Ovary (tissue), 10 donors: ENCODE measurements at regions of chr5 and their contacts with region 1.

Region 1: DNA sequence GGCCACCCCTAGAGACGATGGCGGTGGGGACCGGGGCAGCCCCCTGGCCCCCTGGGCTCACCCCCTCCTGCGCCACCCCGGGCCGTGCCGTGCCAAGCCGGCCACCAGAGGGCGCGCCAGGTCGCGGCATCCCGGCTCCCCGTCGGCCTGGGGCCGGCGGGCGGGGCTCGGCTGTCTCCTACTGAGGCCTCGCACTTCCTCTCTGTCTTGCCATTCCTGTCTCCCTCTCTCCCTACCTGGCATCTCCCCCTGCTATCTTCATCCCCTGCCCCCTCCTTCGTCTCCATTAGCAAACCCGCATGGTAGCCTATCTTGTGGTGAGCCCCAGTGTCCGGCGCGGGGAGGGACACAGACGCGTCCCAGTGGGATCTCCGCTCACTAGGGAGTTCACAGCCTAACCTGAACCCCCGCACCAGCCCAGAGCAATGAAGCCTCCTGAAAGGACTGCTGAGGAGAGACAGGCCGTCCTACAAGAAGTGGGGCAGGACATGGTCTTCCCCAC is 29.8 kb upstream of the FABP6 start:
- DNase-seq: peak; percentile 68 to 87 (median 80)
- H3K4me3 ChIP-seq: peak overlapping the region; percentile 28
- H3K27ac ChIP-seq: no peak overlapping the region
- H3K4me1 ChIP-seq: peaks cover 1% of the 10 kb centered on the region
- H3K27me3 ChIP-seq: no peaks in the 10 kb centered on the region
- CTCF ChIP-seq: peak; percentile 83 to 95 (median 93)
- EP300 ChIP-seq: no peak
- POLR2A ChIP-seq: no peak

Region 2: DNA sequence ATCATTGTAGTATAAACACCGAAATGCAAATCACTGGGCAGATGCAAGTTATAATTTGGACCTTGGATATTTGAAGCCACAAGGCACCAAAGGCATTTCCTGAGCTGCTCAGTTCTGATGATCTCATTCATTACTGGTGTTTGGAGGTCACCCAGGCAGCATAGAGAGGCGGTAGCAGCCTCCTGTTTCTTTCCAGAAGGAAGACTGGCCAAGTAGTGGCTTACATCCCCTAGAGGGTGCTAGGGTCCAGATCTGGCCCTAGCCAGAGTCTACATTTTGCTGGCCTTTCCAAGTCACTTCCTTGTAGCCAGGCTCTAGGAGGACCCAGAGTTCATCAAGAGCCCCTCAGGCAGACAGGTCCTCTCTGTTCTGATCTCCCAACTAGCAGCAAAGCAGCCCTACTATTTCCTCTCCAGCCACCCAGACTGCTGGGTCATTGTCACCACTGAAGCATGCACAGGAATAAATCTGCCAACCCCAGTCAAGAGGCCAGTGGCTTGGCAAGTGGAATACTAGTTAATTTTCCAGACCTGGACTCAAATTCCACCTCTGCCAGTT is 223.9 kb before region 1 on chr5:
- intact Hi-C with region 1: no loop called
- DNase-seq: no peak
- H3K4me3 ChIP-seq: no peak overlapping the region
- H3K27ac ChIP-seq: no peak overlapping the region
- H3K4me1 ChIP-seq: peaks cover 2% of the 10 kb centered on the region
- H3K27me3 ChIP-seq: no peaks in the 10 kb centered on the region
- CTCF ChIP-seq: no peak
- EP300 ChIP-seq: no peak
- POLR2A ChIP-seq: no peak

Region 3: DNA sequence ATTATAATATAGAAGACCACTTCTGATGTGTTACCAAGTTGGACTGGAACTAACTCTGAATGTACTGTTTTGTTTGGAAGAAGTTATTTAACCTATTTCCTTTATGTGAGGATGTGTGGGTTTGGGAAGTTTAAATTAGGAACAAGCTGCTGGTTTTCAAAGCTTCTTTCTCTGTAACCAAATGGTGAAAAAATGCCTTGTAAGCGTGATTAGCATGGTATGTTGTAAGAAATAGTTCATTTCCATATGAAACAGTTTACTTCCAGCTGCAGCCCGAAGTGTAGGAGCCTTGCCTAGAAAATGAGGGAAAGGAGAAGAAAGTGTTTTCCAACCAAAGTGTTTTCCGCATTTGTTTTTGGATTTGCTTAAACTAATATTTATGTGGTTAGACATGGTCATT is 154.5 kb before region 1 on chr5:
- intact Hi-C with region 1: no loop called
- DNase-seq: no peak
- H3K4me3 ChIP-seq: no peak overlapping the region
- H3K27ac ChIP-seq: no peak overlapping the region
- H3K4me1 ChIP-seq: no peaks in the 10 kb centered on the region
- H3K27me3 ChIP-seq: no peaks in the 10 kb centered on the region
- CTCF ChIP-seq: no peak
- EP300 ChIP-seq: no peak
- POLR2A ChIP-seq: no peak

Region 4: GRCh38 chr5:160119142-160119904 is 80.1 kb before region 1 on chr5 and contains the start of gene PWWP2A:
- intact Hi-C with region 1: loop called in 1 of 4 experiments (anchors 10 kb)
- DNase-seq: peak; percentile 98 to 100 (median 99)
- H3K4me3 ChIP-seq: peak within 1 kb of the TSS; percentile 84
- H3K27ac ChIP-seq: peak within 1 kb of the TSS; percentile 89 to 98
- H3K4me1 ChIP-seq: no peaks in the 10 kb centered on the region
- H3K27me3 ChIP-seq: no peaks in the 10 kb centered on the region
- CTCF ChIP-seq: peak in 2 of 3 donors; percentile 11 to 42
- EP300 ChIP-seq: no peak
- POLR2A ChIP-seq: peak; percentile 78
- total RNA-seq, gene PWWP2A: 23.2 to 48.5 (median 27.9) TPM